ENCODE measurements at regions of chr14 and their contacts with region 1.

Region 1: GRCh38 chr14:98926146-98926545 is 345.9 kb downstream of the BCL11B start:
- DNase-seq: peak; percentile 27
- H3K4me3 ChIP-seq: no peak overlapping the region
- H3K27ac ChIP-seq: peak overlapping the region; percentile 62
- H3K4me1 ChIP-seq: peaks cover 19% of the 10 kb centered on the region
- CTCF ChIP-seq: no peak

Region 2: DNA sequence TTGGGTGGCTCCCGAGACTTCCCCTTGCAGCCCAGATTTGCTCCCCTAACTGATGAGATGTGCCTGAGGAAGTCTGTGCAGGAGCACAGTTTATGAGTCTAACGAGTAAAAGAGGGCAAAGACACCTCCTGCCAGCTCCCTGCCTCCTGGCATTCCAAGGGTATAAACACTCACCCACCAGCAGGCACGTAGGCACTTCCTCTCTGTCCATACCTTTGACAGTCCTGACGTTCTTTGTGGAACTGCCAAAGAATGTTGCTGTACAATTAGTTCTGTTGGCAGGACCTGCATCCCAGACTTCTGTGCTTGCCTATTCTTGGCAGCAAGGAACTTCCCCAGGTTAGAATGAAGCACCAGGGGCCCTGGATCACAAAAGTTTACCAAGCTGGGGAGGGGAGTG is 543.5 kb before region 1 on chr14:
- CTCF ChIA-PET with region 1: no interaction called
- POLR2A ChIA-PET with region 1: no interaction called
- intact Hi-C with region 1: no loop called
- DNase-seq: no peak
- H3K4me3 ChIP-seq: no peak overlapping the region
- H3K27ac ChIP-seq: no peak overlapping the region
- H3K4me1 ChIP-seq: no peaks in the 10 kb centered on the region
- CTCF ChIP-seq: no peak

Region 3: GRCh38 chr14:98725191-98725590 is 201.0 kb before region 1 on chr14:
- CTCF ChIA-PET with region 1: no interaction called
- POLR2A ChIA-PET with region 1: no interaction called
- intact Hi-C with region 1: loop called (anchors 10 kb)
- DNase-seq: peak; percentile 46
- H3K4me3 ChIP-seq: peak overlapping the region; percentile 18
- H3K27ac ChIP-seq: peak overlapping the region; percentile 44
- H3K4me1 ChIP-seq: peaks cover 56% of the 10 kb centered on the region
- CTCF ChIP-seq: no peak

Region 4: GRCh38 chr14:98742001-98742400 is 184.1 kb before region 1 on chr14:
- CTCF ChIA-PET with region 1: no interaction called
- POLR2A ChIA-PET with region 1: no interaction called
- intact Hi-C with region 1: no loop called
- DNase-seq: no peak
- H3K4me3 ChIP-seq: no peak overlapping the region
- H3K27ac ChIP-seq: no peak overlapping the region
- H3K4me1 ChIP-seq: peaks cover 10% of the 10 kb centered on the region
- CTCF ChIP-seq: no peak

Region 5: DNA sequence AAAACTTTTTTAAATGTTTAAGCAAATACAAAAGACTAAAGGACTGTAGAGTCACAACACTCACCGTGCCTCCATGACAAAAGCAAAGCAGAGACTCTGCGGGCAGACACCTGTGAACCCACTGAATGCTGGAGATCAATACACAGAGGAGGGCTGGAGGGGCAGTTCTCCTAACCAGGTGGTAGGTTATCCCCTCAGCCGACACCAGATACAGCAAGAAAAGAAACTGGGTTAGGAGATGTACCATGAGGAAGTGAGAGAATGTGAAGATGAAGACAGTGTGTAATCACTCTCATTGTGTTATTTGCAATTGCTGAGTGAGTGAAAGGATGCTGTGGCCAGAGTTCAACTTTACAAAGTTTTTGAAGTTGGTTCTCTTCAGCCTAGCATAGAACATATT is 134.5 kb before region 1 on chr14:
- CTCF ChIA-PET with region 1: no interaction called
- POLR2A ChIA-PET with region 1: interaction called, 3 read pairs
- intact Hi-C with region 1: loop called (anchors 5 kb)
- DNase-seq: peak; percentile 86
- H3K4me3 ChIP-seq: peak overlapping the region; percentile 56
- H3K27ac ChIP-seq: peak overlapping the region; percentile 97
- H3K4me1 ChIP-seq: peaks cover 44% of the 10 kb centered on the region
- CTCF ChIP-seq: no peak

Region 6: GRCh38 chr14:98853063-98853729 is 73.0 kb before region 1 on chr14:
- CTCF ChIA-PET with region 1: no interaction called
- POLR2A ChIA-PET with region 1: no interaction called
- intact Hi-C with region 1: no loop called
- DNase-seq: no peak
- H3K4me3 ChIP-seq: no peak overlapping the region
- H3K27ac ChIP-seq: no peak overlapping the region
- H3K4me1 ChIP-seq: no peaks in the 10 kb centered on the region
- CTCF ChIP-seq: no peak

Region 7: GRCh38 chr14:98912655-98913054 is 13.5 kb before region 1 on chr14:
- CTCF ChIA-PET with region 1: no interaction called
- POLR2A ChIA-PET with region 1: interaction called, 14 read pairs
- intact Hi-C with region 1: no loop called
- DNase-seq: peak; percentile 19
- H3K4me3 ChIP-seq: no peak overlapping the region
- H3K27ac ChIP-seq: no peak overlapping the region
- H3K4me1 ChIP-seq: peaks cover 15% of the 10 kb centered on the region
- CTCF ChIP-seq: no peak

Region 8: DNA sequence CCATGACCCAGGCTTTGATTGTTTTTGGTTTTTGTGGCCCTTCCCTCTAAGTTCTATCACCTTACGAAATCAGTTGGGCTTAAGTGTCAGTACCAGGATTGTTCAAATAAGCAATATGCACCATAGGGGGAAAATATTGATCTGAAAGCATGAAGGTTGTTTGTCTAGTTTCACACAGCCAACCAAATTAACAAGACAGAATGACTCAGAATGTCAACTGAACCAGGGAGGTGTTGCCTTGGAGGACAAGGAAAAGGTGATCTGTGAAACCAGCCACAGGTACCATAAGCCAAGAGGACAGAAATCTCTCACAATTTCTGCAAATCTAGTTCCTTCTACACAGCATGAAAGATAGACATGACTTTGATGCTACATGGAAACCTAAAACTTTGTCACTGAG is 47.9 kb after region 1 on chr14:
- CTCF ChIA-PET with region 1: no interaction called
- POLR2A ChIA-PET with region 1: no interaction called
- intact Hi-C with region 1: no loop called
- DNase-seq: no peak
- H3K4me3 ChIP-seq: no peak overlapping the region
- H3K27ac ChIP-seq: no peak overlapping the region
- H3K4me1 ChIP-seq: no peaks in the 10 kb centered on the region
- CTCF ChIP-seq: no peak

Measured in OCI-LY7 (cell line).